Pancreas (tissue), 10 donors: ENCODE measurements at regions of chr5 and their contacts with region 1.

Region 1: GRCh38 chr5:151126199-151126645 is 31.4 kb downstream of the ANXA6 start:
- DNase-seq: peak; percentile 51 to 87 (median 70)
- ATAC-seq: peak; percentile 47 to 78 (median 74)
- H3K4me3 ChIP-seq: no peak overlapping the region
- H3K27ac ChIP-seq: no peak overlapping the region
- H3K4me1 ChIP-seq: peaks cover 0 to 4% (median 0%) of the 10 kb centered on the region in 3 donors
- H3K27me3 ChIP-seq: no peaks in the 10 kb centered on the region
- CTCF ChIP-seq: peak; percentile 62 to 80 (median 74)

Region 2: DNA sequence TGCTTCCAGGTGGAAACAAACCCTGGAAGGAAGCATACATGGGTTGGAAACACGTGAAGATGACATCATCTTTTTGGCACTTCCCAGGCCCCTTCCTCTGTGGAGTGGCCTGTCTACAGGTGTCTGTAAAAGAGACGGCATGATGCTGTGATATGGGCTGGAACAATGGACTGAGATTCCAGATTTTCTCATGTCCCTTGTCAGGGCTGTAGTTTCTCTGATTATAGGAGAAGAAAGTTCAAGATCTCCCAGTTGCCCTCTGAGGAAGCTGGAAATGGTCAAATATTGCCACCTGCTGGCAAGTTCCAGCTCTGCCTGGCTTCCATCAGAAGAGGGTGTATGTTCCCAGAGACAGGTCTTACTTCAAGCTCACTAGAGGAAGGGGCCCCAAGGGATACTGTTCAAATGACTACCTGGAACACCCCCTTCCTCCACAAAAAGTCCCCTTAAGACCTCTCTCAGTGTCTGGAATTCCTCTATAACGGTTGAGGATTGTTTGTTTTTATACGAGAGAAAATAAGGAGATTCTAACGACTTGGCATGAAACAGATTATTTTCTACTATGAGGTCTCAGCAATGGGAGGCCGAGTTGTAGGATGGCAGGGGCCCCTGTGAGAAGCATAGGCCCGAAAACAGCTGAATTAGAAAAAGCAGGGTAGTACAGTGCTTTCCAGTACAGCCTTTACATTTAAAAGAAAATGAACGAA is 38.6 kb after region 1 on chr5:
- intact Hi-C with region 1: loop called in 2 of 3 experiments (anchors 5 kb)
- DNase-seq: peak in 4 of 6 donors; percentile 60 to 85 (median 62)
- ATAC-seq: peak; percentile 85 to 98 (median 96)
- H3K4me3 ChIP-seq: no peak overlapping the region
- H3K27ac ChIP-seq: no peak overlapping the region
- H3K4me1 ChIP-seq: peaks cover 0 to 3% (median 0%) of the 10 kb centered on the region in 3 donors
- H3K27me3 ChIP-seq: no peaks in the 10 kb centered on the region
- CTCF ChIP-seq: peak; percentile 70 to 83 (median 80)

Region 3: GRCh38 chr5:151240924-151241635 is 114.9 kb after region 1 on chr5:
- intact Hi-C with region 1: loop called in 1 of 3 experiments (anchors 10 kb)
- DNase-seq: no peak
- ATAC-seq: no peak
- H3K4me3 ChIP-seq: no peak overlapping the region
- H3K27ac ChIP-seq: no peak overlapping the region
- H3K4me1 ChIP-seq: no peaks in the 10 kb centered on the region
- H3K27me3 ChIP-seq: no peaks in the 10 kb centered on the region
- CTCF ChIP-seq: no peak